Activated CD4-positive, alpha-beta T cell treated with anti-CD3 and anti-CD28 coated beads for 36 hours (primary cell): ENCODE measurements at regions of chr10 and their contacts with region 1.

Region 1: GRCh38 chr10:32958085-32959005 is at the start of gene ITGB1:
- DNase-seq: peak; percentile 92
- ATAC-seq: peak; percentile 83
- H3K4me3 Mint-ChIP-seq: peak within 1 kb of the TSS; percentile 83
- H3K27ac Mint-ChIP-seq: peak within 1 kb of the TSS; percentile 96
- H3K4me1 Mint-ChIP-seq: peaks cover 43% of the 10 kb centered on the region
- H3K27me3 Mint-ChIP-seq: peaks cover 10% of the 10 kb centered on the region
- total RNA-seq, gene ITGB1: 57.6 to 68.9 TPM

Region 2: DNA sequence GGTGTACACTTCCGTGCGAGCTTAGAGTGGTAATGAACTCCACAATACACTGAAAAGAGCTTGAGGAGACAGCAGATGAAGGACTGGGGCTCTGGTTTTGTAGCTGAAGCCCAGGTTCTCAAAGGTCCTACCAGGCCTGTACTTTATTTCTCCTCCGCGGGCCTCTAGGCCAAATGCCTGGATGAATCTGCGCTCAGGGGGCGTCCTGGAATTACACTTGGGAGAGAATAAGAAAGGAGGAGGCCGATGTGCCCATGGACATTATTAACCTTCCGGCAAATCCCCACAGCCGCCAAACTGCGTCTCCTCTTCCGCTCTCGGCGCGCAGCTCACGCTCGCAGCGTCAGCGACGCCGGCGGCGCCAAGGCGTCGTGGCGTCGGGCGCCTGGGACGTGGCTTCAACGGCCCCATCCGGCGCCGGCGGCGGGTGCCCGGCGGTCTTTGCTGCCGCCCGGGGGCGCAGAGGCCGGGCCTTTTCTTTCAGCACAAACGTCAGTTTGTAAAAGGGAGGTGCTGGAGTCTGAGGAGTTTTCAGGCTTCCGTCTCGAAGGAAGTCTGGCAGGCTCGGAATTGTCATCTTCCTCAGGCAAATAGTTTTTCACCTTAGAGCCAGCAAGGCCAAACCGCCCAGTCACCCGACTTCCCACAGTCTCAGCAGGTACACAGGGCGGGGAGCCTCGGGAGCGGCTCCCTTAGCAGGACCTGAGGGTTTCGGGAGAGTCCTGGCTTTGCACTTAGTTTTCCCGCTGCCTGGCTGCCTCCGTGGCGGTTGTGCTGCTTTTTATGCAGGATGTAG is 512.4 kb before region 1 on chr10 and contains the start of gene CCDC7:
- CTCF ChIA-PET with region 1: no interaction called
- POLR2A ChIA-PET with region 1: no interaction called
- intact Hi-C with region 1: loop called in 1 of 2 experiments (anchors 2 kb)
- DNase-seq: peak; percentile 91
- ATAC-seq: peak; percentile 97
- H3K4me3 Mint-ChIP-seq: peak within 1 kb of the TSS; percentile 82
- H3K27ac Mint-ChIP-seq: peak within 1 kb of the TSS; percentile 99
- H3K4me1 Mint-ChIP-seq: peaks cover 10% of the 10 kb centered on the region
- H3K27me3 Mint-ChIP-seq: no peaks in the 10 kb centered on the region
- total RNA-seq, gene CCDC7: 9.0 TPM

Region 3: DNA sequence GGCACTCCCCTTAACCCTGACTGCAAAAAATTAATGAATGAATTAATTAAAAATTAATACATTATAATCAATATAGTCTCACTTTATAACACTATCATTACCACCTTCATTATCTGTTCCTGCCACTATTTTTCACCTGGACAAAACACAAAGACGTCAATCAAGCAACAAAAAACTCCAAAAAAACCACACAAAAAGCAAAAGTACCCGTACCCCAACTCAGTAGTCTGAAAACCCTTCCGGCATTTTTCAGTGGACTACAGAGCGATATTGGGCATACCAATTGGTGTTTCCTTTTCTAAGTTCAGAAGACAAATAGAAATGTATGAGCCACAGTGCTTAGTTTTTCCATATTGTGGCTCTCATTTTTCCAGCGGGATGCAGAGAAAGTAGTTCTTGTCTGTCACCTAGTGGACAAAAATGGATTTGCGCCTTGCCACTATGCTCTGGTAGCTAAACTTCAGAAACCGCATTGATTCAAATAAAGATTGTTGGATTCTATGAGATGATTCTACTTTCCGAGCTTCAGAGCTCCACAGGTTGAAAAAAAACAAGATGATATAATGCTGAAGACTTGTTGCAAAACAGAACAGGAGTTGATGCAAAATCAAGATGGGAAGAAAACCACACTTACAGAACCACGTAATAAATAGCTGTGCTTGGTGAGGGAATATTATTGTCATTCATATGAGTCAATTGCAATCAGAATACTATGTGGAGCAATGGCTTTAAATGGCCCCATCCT is 50.3 kb after region 1 on chr10:
- CTCF ChIA-PET with region 1: interaction called, 10 read pairs
- POLR2A ChIA-PET with region 1: no interaction called
- intact Hi-C with region 1: loop called (anchors 1 kb)
- DNase-seq: peak; percentile 80
- ATAC-seq: peak; percentile 61
- H3K4me3 Mint-ChIP-seq: peak overlapping the region; percentile 40
- H3K27ac Mint-ChIP-seq: peak overlapping the region; percentile 67
- H3K4me1 Mint-ChIP-seq: peaks cover 41% of the 10 kb centered on the region
- H3K27me3 Mint-ChIP-seq: peaks cover 7% of the 10 kb centered on the region

Region 4: GRCh38 chr10:33143160-33143728 is 184.9 kb after region 1 on chr10:
- CTCF ChIA-PET with region 1: no interaction called
- POLR2A ChIA-PET with region 1: no interaction called
- intact Hi-C with region 1: loop called (anchors 1 to 2 kb)
- DNase-seq: peak; percentile 76
- ATAC-seq: peak; percentile 86
- H3K4me3 Mint-ChIP-seq: no peak overlapping the region
- H3K27ac Mint-ChIP-seq: peak overlapping the region; percentile 75
- H3K4me1 Mint-ChIP-seq: peaks cover 56% of the 10 kb centered on the region
- H3K27me3 Mint-ChIP-seq: peaks cover 2% of the 10 kb centered on the region

Region 5: DNA sequence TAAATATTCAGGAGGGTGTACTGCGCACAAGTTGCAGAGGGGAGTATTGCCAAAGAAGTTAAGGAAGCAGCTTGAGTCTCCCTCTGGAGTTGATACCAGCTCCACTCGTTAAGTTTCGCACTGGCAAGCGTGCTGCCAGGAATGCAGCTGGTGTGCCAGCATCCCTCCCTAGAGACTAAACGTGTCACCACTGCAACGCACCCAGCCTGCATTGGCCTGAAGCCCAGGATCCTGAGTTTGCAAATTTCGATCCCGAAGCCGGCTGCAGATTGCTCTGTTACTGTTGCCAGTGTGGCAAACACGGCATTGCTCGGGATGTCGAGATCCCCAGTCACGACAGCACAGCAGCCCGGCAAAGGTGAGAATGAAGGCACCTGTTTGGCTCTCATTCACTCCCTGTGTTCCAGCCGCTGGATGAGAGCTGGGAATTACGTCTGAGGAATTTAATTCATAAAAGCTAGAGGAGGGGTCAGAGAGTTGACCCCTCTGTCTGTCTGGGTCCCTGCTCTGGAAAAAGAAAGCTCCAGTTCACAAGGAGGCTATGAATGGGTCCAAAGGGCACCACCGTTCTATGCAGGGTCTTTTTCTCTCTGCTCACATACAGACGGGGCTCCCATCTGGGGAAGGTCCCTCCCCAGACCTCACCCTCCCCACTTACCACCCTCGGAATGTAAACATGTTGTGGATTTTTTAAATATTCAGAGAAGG is 315.1 kb after region 1 on chr10:
- CTCF ChIA-PET with region 1: no interaction called
- POLR2A ChIA-PET with region 1: no interaction called
- intact Hi-C with region 1: no loop called
- DNase-seq: no peak
- ATAC-seq: no peak
- H3K4me3 Mint-ChIP-seq: no peak overlapping the region
- H3K27ac Mint-ChIP-seq: no peak overlapping the region
- H3K4me1 Mint-ChIP-seq: no peaks in the 10 kb centered on the region
- H3K27me3 Mint-ChIP-seq: peaks cover 38% of the 10 kb centered on the region